Activated CD4-positive, alpha-beta T cell treated with anti-CD3 and anti-CD28 coated beads for 36 hours (primary cell): ENCODE measurements at regions of chr19 and their contacts with region 1.

Region 1: GRCh38 chr19:46954993-46955812 is 64.4 kb upstream of the NPAS1 start:
- DNase-seq: peak; percentile 49
- ATAC-seq: peak; percentile 62
- H3K4me3 Mint-ChIP-seq: peak overlapping the region; percentile 72
- H3K27ac Mint-ChIP-seq: peak overlapping the region; percentile 95
- H3K4me1 Mint-ChIP-seq: peaks cover 70% of the 10 kb centered on the region
- H3K27me3 Mint-ChIP-seq: no peaks in the 10 kb centered on the region

Region 2: GRCh38 chr19:46860125-46860845 is 94.9 kb before region 1 on chr19:
- CTCF ChIA-PET with region 1: no interaction called
- POLR2A ChIA-PET with region 1: no interaction called
- intact Hi-C with region 1: loop called (anchors 1 to 2 kb)
- DNase-seq: peak; percentile 99
- ATAC-seq: peak; percentile 82
- H3K4me3 Mint-ChIP-seq: no peak overlapping the region
- H3K27ac Mint-ChIP-seq: peak overlapping the region; percentile 78
- H3K4me1 Mint-ChIP-seq: peaks cover 25% of the 10 kb centered on the region
- H3K27me3 Mint-ChIP-seq: no peaks in the 10 kb centered on the region

Region 3: GRCh38 chr19:46919324-46919723 is 35.9 kb before region 1 on chr19:
- CTCF ChIA-PET with region 1: interaction called, 3 read pairs
- POLR2A ChIA-PET with region 1: interaction called, 6 read pairs
- intact Hi-C with region 1: loop called in 1 of 2 experiments (anchors 5 kb)
- DNase-seq: peak; percentile 60
- ATAC-seq: peak; percentile 85
- H3K4me3 Mint-ChIP-seq: no peak overlapping the region
- H3K27ac Mint-ChIP-seq: no peak overlapping the region
- H3K4me1 Mint-ChIP-seq: peaks cover 48% of the 10 kb centered on the region
- H3K27me3 Mint-ChIP-seq: no peaks in the 10 kb centered on the region